GM12878 (cell line): ENCODE measurements at regions of chr21 and their contacts with region 1.

Region 1: DNA sequence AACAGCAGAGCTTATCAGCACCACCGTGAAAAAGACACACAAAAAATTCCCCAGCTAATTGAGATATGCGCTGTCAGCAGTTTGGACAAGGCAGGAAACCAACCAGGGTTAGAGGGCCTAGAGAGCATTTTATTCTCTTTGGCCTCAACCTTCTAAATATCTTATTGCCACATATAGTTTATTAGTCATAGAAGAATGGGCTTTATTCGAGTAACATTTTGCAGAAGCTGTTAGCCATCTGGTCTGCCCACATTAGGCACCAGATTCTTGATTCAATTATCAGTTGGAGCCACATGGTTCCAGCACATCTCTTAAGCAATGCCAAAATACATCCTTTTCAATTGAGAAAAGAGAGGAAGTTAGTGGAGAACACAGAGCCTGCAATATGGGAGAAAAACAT is 109.9 kb upstream of the CXADR start:
- DNase-seq: no peak
- ATAC-seq: no peak
- H3K4me3 ChIP-seq: no peak overlapping the region
- H3K27ac ChIP-seq: no peak overlapping the region
- H3K4me1 ChIP-seq: no peaks in the 10 kb centered on the region
- H3K27me3 ChIP-seq: no peaks in the 10 kb centered on the region
- CTCF ChIP-seq: no peak
- EP300 ChIP-seq: no peak
- POLR2A ChIP-seq: no peak
- RAD21 ChIP-seq: no peak

Region 2: GRCh38 chr21:17343055-17343454 is 59.9 kb before region 1 on chr21:
- CTCF ChIA-PET with region 1: no interaction called
- POLR2A ChIA-PET with region 1: no interaction called
- RAD21 ChIA-PET with region 1: no interaction called
- SMC1A ChIA-PET with region 1: no interaction called
- in situ Hi-C with region 1: loop called (anchors 10 kb)
- intact Hi-C with region 1: no loop called
- DNase-seq: no peak
- ATAC-seq: no peak
- H3K4me3 ChIP-seq: no peak overlapping the region
- H3K27ac ChIP-seq: no peak overlapping the region
- H3K4me1 ChIP-seq: no peaks in the 10 kb centered on the region
- H3K27me3 ChIP-seq: no peaks in the 10 kb centered on the region
- CTCF ChIP-seq: no peak
- EP300 ChIP-seq: no peak
- POLR2A ChIP-seq: no peak
- RAD21 ChIP-seq: no peak

Region 3: DNA sequence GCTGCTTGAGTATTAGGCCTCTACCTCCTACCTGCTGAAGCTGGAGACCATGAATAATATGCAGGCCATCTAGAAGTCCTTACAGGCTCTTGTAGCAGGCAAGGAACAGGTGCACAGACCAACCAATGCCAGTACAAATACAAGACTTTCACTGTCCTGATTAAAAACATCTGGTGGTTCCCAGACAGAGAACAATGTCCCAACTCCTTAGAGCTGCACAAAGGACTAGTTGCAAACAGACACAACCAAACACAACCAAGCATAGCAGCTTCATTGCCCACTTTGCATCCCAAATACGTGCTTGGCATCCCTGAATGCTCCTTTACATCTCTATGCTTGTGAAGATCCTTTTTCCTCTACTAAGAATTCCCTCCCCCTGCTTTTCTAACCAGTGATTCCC is 11.8 kb after region 1 on chr21:
- CTCF ChIA-PET with region 1: no interaction called
- POLR2A ChIA-PET with region 1: no interaction called
- RAD21 ChIA-PET with region 1: no interaction called
- SMC1A ChIA-PET with region 1: no interaction called
- in situ Hi-C with region 1: no loop called
- intact Hi-C with region 1: no loop called
- DNase-seq: no peak
- ATAC-seq: no peak
- H3K4me3 ChIP-seq: no peak overlapping the region
- H3K27ac ChIP-seq: no peak overlapping the region
- H3K4me1 ChIP-seq: no peaks in the 10 kb centered on the region
- H3K27me3 ChIP-seq: no peaks in the 10 kb centered on the region; a peak in 1 of 4 replicates
- CTCF ChIP-seq: no peak
- EP300 ChIP-seq: no peak
- POLR2A ChIP-seq: no peak
- RAD21 ChIP-seq: no peak

Region 4: DNA sequence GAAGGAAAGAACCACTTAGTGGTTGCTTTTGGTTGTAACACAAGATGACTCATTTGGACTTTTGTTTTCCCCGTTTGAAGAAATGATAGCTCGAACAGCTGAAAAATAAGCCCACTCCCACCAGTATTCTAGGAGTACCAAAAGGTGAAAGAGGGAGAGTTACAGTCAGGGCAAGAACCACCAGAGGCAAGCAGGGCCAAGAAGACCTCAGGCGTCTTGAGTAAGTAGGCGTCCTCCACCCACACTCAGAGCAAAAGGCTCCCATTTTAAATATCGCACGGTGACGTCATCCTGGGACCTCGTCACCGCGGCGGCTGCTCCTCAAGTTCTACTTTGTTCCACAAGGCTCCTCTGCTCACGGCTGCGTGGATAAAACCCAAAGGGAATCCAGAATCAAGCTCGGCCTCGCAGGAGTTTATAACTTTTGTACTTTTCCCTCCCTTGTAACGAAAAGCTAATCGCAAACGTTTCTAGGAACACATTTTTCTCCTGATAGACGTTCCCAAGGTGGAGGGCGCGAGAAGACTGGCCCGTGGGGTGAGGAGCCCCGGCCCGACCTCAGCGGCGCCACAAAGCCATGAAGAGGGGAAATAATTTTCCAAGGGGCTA is 208.6 kb after region 1 on chr21:
- CTCF ChIA-PET with region 1: no interaction called
- POLR2A ChIA-PET with region 1: no interaction called
- RAD21 ChIA-PET with region 1: no interaction called
- SMC1A ChIA-PET with region 1: no interaction called
- in situ Hi-C with region 1: no loop called
- intact Hi-C with region 1: no loop called
- DNase-seq: peak; percentile 59
- ATAC-seq: peak; percentile 68
- H3K4me3 ChIP-seq: peak overlapping the region; percentile 100
- H3K27ac ChIP-seq: peak overlapping the region; percentile 70
- H3K4me1 ChIP-seq: peaks cover 4% of the 10 kb centered on the region
- H3K27me3 ChIP-seq: no peaks in the 10 kb centered on the region
- CTCF ChIP-seq: no peak
- EP300 ChIP-seq: 0 out of 4 replicates have a peak, but pooled peaks have one; percentile 13 to 20
- POLR2A ChIP-seq: 0 out of 2 replicates have a peak, but pooled peaks have one; percentile 48
- RAD21 ChIP-seq: no peak